Activated B cell treated with CpG ODN at 0.5 μM for 24 hours (primary cell): ENCODE measurements at regions of chr9 and their contacts with region 1.

Region 1: GRCh38 chr9:37528652-37529510 is 43.1 kb downstream of the POLR1E start:
- DNase-seq: peak; percentile 43
- ATAC-seq: peak; percentile 72
- H3K4me3 Mint-ChIP-seq: peak overlapping the region; percentile 57
- H3K27ac Mint-ChIP-seq: peak overlapping the region; percentile 76
- H3K4me1 Mint-ChIP-seq: peaks cover 38% of the 10 kb centered on the region
- H3K27me3 Mint-ChIP-seq: no peaks in the 10 kb centered on the region
- CTCF ChIP-seq: no peak

Region 2: GRCh38 chr9:37547328-37547878 is 18.5 kb after region 1 on chr9:
- CTCF ChIA-PET with region 1: no interaction called
- POLR2A ChIA-PET with region 1: interaction called, 4 read pairs
- intact Hi-C with region 1: loop called (anchors 2 kb)
- DNase-seq: no peak
- ATAC-seq: no peak
- H3K4me3 Mint-ChIP-seq: no peak overlapping the region
- H3K27ac Mint-ChIP-seq: no peak overlapping the region
- H3K4me1 Mint-ChIP-seq: peaks cover 42% of the 10 kb centered on the region
- H3K27me3 Mint-ChIP-seq: no peaks in the 10 kb centered on the region
- CTCF ChIP-seq: no peak

Region 3: GRCh38 chr9:37565661-37566618 is 37.1 kb after region 1 on chr9:
- CTCF ChIA-PET with region 1: no interaction called
- POLR2A ChIA-PET with region 1: interaction called, 7 read pairs
- intact Hi-C with region 1: loop called (anchors 2 kb)
- DNase-seq: no peak
- ATAC-seq: peak; percentile 87
- H3K4me3 Mint-ChIP-seq: peak overlapping the region; percentile 78
- H3K27ac Mint-ChIP-seq: peak overlapping the region; percentile 92
- H3K4me1 Mint-ChIP-seq: peaks cover 82% of the 10 kb centered on the region
- H3K27me3 Mint-ChIP-seq: no peaks in the 10 kb centered on the region
- CTCF ChIP-seq: no peak

Region 4: DNA sequence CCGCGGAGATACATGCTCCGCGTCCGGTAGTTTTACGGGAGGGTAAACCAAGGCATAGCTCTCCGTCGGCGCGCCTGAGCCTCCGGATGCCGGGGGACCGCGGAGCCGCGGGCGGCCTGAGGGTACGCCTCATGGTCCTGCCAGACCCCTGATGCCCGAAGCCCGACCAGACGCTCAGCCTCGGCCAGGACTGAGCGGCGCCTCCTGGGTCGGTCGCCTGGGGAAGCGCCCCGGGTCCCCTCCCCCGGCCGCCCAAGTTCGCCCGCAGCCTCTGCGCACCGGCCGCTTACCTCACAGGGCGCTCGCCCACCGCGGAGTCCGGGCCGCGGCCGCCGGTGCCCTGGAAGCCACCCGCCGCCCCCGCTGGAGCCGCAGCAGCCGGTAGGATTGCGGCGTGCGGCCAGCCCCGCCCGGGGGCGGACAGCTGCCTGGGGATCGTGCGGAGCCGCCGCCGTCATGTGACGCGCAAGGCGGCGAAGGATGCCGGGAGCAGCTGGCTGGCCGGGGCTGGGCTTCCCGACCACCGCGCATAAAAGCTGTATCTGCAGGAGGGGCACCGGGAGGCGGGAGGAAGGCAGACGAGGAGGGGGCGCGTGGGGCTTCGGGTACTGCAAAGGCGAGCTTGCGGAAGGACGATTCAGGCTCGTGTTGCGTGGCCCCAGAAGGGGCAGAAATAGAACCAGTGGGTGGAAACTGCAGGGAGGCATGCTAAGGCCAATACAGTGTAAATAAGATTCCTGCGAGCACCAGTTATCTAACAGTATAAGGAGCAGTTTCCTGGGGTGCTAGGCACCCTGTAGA is 47.2 kb after region 1 on chr9 and contains the start of gene FBXO10:
- CTCF ChIA-PET with region 1: no interaction called
- POLR2A ChIA-PET with region 1: interaction called, 4 read pairs
- intact Hi-C with region 1: loop called (anchors 1 kb)
- DNase-seq: peak; percentile 65
- ATAC-seq: peak; percentile 72
- H3K4me3 Mint-ChIP-seq: peak within 1 kb of the TSS; percentile 92
- H3K27ac Mint-ChIP-seq: peak within 1 kb of the TSS; percentile 89
- H3K4me1 Mint-ChIP-seq: peaks cover 47% of the 10 kb centered on the region
- H3K27me3 Mint-ChIP-seq: no peaks in the 10 kb centered on the region
- CTCF ChIP-seq: no peak
- total RNA-seq, gene FBXO10: 29.8 and 39.4 TPM in 2 replicates